ENCODE measurements at regions of chr15 and their contacts with region 1.

Region 1: DNA sequence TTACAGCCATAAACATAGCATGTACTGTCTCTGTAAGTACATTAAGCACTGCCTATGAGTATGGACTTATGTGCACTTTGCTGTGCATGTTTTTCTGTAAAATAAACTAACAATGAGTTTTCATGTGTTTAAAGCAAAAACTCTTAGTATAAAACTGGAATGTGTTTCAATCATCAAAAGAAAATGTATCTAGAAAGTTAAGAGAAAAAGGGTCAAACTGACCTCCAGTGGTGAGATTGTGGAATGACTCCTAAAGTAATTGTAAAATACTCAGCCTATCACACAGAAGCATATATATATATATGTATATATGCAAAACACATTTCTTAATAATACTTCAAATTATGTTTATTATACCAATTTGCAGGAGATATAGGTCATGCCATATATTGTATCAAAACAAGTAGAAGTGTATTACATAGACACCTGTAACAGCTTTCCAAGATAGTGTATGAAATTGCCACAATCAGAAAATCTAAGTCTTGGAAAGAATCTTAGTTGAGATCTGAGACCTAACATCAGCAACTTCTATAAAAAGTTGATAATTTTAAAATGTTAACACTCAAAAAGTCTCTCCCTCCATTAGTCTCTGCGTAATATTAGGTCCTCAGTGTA is 199.6 kb downstream of the FMN1 start:
- DNase-seq: no peak
- ATAC-seq: no peak
- H3K4me3 ChIP-seq: no peak overlapping the region
- H3K27ac ChIP-seq: no peak overlapping the region
- H3K4me1 ChIP-seq: no peaks in the 10 kb centered on the region
- H3K27me3 ChIP-seq: no peaks in the 10 kb centered on the region

Region 2: DNA sequence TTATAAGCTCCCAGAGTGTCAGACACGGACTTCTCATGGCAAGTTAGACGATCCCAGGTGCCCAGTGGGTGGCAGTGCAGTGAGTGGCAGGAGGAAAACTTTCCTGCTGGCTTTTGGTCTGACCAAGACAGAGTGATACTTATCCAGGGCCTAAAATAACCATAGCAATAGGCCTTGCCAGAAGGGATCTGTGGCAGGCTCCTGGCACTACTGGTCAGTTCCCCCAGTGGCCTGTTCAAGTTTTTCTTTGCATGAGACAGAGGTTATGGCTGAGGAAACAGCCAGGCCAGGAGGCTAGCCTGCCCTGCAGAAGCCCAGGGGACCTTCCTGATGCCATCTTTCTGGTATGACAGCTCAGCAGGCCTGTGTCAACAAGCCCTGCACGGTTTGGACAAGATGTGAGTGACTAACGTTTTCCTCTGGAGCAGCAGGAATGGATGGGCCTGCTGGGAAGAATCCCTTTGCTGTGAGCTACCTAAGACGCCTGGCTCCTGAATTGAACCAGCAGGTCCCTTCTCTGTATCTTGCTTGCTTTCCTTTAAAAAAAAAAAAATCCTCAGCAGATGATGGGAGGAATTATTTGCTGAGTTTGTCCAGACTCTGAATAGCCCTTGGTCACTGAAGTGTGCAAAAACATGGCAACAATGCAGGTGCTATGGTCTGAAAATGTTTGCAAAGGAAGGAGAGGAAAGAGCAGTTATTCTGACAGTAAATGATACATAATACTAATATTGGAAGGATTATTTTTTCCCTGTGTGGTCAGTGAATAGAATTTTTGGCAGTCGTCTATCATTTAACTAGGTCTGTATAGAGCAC is 335.4 kb before region 1 on chr15:
- intact Hi-C with region 1: loop called (anchors 2 to 5 kb)
- DNase-seq: peak; percentile 63 to 80
- ATAC-seq: peak; percentile 88
- H3K4me3 ChIP-seq: no peak overlapping the region
- H3K27ac ChIP-seq: peak overlapping the region in 1 of 2 donors; percentile 2
- H3K4me1 ChIP-seq: peaks cover 0 to 2% of the 10 kb centered on the region in 2 donors
- H3K27me3 ChIP-seq: no peaks in the 10 kb centered on the region

Region 3: DNA sequence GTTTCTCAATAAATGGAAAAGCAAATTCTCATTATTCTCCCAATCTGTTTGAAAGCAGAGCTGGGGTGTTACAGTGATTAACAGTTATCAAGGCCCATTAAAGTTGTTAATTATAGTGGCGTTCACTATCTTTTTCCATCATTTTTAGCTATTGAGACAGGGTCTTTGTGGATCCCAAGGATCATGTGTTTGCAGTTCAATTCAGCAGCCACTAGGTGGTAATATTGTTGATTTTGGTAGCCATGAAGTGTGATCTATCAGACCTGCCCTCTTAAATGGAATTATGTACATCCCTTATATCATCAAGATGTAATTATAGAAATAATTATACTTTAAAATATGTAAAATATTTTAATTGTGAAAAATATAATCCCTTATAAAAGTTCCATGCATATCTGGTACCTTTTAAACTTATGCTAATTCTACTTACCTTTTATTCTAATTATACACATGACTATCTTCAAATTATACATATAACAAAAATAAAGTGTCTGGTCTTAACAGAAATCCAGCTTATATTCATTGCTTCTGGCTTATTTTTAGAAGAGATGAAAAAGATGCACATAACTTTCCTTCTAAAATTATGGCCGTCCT is 150.7 kb before region 1 on chr15:
- intact Hi-C with region 1: loop called in 1 of 2 experiments (anchors 5 kb)
- DNase-seq: no peak
- ATAC-seq: no peak
- H3K4me3 ChIP-seq: no peak overlapping the region
- H3K27ac ChIP-seq: no peak overlapping the region
- H3K4me1 ChIP-seq: no peaks in the 10 kb centered on the region
- H3K27me3 ChIP-seq: no peaks in the 10 kb centered on the region

Region 4: GRCh38 chr15:32849769-32850668 is 144.9 kb before region 1 on chr15:
- intact Hi-C with region 1: loop called in 1 of 2 experiments (anchors 5 kb)
- DNase-seq: no peak
- ATAC-seq: no peak
- H3K4me3 ChIP-seq: no peak overlapping the region
- H3K27ac ChIP-seq: no peak overlapping the region
- H3K4me1 ChIP-seq: peaks cover 2 to 8% of the 10 kb centered on the region in 2 donors
- H3K27me3 ChIP-seq: no peaks in the 10 kb centered on the region